PC-9 (cell line): ENCODE measurements at regions of chr22 and their contacts with region 1.

Region 1: DNA sequence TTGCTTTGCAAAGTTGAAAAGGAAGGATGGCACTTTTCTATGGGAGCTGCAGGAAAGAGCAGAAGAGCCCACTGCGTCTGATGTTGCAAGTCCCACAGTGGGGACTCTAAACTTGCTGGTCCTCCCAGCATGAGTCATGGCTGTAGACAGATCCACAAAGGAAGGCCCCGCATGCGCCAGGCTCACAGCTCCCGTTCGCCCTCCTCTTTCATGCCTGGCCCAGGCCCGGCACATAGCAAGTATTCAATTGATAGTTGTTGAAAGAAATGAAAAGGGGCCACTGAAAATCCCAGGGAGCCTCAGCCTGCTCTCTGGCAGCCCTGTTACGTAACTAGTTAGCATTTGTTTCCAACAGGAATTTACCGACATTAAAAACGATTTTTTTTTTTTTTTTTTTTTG is 18.9 kb downstream of the AP1B1 start:
- DNase-seq: peak in 1 of 2 experiments; percentile 24
- H3K4me3 ChIP-seq: no peak overlapping the region
- H3K27ac ChIP-seq: no peak overlapping the region
- H3K4me1 ChIP-seq: no peaks in the 10 kb centered on the region
- H3K27me3 ChIP-seq: no peaks in the 10 kb centered on the region
- CTCF ChIP-seq: no peak

Region 2: DNA sequence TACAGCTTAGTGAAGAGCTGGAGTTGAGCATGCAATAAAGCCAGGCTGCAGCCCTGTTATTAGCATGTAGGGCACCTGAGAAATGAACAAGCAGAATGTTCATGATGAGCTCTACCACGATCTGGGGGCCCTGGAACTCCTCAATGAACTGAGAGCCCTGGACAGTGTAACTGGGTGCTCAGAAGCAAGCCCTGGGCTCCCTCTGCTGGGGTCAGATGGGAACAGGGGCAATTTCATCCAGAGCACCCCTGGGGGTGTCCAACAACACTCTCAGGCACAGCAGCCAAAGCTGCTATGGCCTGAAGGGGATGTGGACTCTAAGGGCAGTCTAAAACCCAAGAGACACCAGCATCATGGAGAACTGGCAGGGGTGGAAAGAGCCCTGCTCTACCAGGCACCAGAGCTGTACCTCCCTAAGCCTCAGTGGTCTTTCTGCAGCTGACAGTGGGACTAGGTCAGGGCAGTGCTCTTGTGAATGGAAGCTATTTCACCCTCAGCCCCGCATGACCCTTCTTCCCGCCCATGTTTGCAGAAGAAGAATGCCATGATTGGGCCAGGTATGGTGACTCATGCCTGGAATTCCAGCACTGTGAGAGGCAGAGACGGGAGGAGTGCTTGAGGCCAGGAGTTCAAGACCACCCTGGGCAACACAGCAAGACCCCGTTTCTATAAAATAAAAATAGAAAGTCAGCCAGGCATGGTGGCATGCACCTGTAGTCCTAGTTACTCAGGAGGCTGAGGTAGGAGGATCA is 155.2 kb after region 1 on chr22:
- CTCF ChIA-PET with region 1: interaction called, 14 read pairs
- POLR2A ChIA-PET with region 1: no interaction called
- intact Hi-C with region 1: no loop called
- DNase-seq: peak in 1 of 2 experiments; percentile 8
- H3K4me3 ChIP-seq: no peak overlapping the region
- H3K27ac ChIP-seq: no peak overlapping the region
- H3K4me1 ChIP-seq: no peaks in the 10 kb centered on the region
- H3K27me3 ChIP-seq: no peaks in the 10 kb centered on the region
- CTCF ChIP-seq: peak; percentile 60